GM12878 (cell line): ENCODE measurements at regions of chr3 and their contacts with region 1.

Region 1: GRCh38 chr3:23761440-23761896 is 44.3 kb upstream of the UBE2E1 start:
- DNase-seq: peak; percentile 56
- ATAC-seq: peak; percentile 68
- H3K4me3 ChIP-seq: peak overlapping the region; percentile 50; the same call in 1 of the 2 replicates
- H3K27ac ChIP-seq: peak overlapping the region; percentile 39
- H3K4me1 ChIP-seq: peaks cover 37% of the 10 kb centered on the region
- H3K27me3 ChIP-seq: no peaks in the 10 kb centered on the region
- CTCF ChIP-seq: peak; percentile 49 to 59 (median 54)
- EP300 ChIP-seq: no peak; a peak in 1 of 4 replicates
- POLR2A ChIP-seq: no peak
- RAD21 ChIP-seq: peak; percentile 72

Region 2: GRCh38 chr3:23590424-23591273 is 170.8 kb before region 1 on chr3:
- CTCF ChIA-PET with region 1: interaction called, 14 read pairs
- POLR2A ChIA-PET with region 1: no interaction called
- RAD21 ChIA-PET with region 1: interaction called, 26 read pairs
- SMC1A ChIA-PET with region 1: interaction called, 23 read pairs
- in situ Hi-C with region 1: no loop called
- intact Hi-C with region 1: loop called (anchors 5 kb)
- DNase-seq: peak; percentile 78
- ATAC-seq: peak; percentile 80
- H3K4me3 ChIP-seq: no peak overlapping the region
- H3K27ac ChIP-seq: peak overlapping the region; percentile 17; the same call in 1 of the 2 replicates
- H3K4me1 ChIP-seq: peaks cover 37% of the 10 kb centered on the region
- H3K27me3 ChIP-seq: no peaks in the 10 kb centered on the region
- CTCF ChIP-seq: no peak
- EP300 ChIP-seq: peak in 1 of 2 experiments; percentile 83; a peak in 3 of 4 replicates
- POLR2A ChIP-seq: no peak
- RAD21 ChIP-seq: peak; percentile 27

Region 3: DNA sequence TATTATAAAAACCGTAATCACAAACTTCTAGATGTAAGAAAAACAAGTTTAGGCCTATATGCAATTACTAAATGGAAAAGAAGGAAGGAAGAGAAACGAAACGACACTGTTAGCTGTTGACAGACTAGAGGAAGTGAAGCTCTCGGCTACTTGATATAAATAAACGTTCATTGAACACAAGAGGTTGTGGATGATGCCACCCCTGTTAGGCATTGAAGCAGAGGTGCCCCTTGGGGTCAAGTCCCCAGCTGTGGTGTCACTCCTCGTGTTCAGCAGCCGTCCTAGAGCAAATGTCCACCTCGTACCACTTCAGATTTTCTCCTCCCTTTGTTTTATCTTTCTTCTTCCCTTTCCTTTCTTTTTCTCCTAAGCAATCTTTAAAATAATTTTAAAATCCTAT is 102.2 kb before region 1 on chr3:
- CTCF ChIA-PET with region 1: interaction called, 5 read pairs
- POLR2A ChIA-PET with region 1: interaction called, 5 read pairs
- RAD21 ChIA-PET with region 1: interaction called, 23 read pairs
- SMC1A ChIA-PET with region 1: interaction called, 33 read pairs
- in situ Hi-C with region 1: no loop called
- intact Hi-C with region 1: no loop called
- DNase-seq: peak; percentile 60
- ATAC-seq: peak; percentile 88
- H3K4me3 ChIP-seq: no peak overlapping the region
- H3K27ac ChIP-seq: peak overlapping the region; percentile 81
- H3K4me1 ChIP-seq: peaks cover 36% of the 10 kb centered on the region
- H3K27me3 ChIP-seq: no peaks in the 10 kb centered on the region
- CTCF ChIP-seq: no peak
- EP300 ChIP-seq: peak; percentile 36 to 56; a peak in 1 of 4 replicates
- POLR2A ChIP-seq: no peak
- RAD21 ChIP-seq: no peak

Region 4: DNA sequence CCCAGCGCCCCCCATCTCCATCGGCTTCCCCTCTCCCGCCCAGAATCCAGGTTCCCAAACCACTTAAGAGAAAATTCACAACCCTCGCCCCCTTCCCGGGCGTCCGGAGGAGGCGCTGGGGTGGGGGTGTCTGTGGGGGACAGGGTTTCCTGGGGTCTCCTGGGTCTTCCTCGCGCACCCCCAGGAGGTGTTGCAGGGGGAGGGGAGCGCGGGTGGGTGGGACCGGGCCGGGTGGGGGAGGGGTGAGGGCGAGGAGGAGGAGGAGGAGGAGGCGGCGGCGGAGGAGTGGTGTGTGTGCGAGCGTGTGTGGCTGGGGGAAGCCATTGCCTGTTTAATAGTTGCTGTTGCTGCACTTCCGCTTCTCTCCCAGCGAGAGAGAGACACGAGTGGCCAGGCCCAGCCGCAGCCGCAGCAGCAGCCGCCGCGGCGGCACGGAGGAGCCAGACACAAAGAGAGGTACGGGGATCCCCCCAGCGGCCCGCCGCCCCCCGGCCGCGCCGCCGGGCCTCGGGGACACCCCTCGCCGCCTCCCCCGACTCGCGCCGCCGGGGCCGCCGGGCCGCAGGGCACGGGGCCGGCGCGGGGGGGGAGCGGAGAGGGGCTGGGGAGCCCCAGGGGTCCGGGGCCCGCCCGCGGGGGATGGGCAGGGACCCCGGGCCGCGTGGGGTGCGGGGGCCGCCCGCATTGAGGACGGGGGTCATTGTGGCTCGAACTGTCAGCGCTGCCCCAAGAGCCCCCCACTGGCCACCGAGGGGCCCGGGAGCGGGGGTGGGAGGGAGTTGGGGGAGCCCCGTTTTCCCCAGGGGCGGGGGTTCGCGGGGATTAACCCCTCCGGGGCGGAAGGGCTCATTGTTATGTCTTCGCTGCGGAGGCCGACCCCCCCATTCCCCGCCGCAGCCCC is 44.4 kb after region 1 on chr3 and contains the start of gene UBE2E1:
- CTCF ChIA-PET with region 1: interaction called, 4 read pairs
- POLR2A ChIA-PET with region 1: interaction called, 7 read pairs
- RAD21 ChIA-PET with region 1: interaction called, 6 read pairs
- SMC1A ChIA-PET with region 1: interaction called, 36 read pairs
- in situ Hi-C with region 1: no loop called
- intact Hi-C with region 1: loop called (anchors 2 kb)
- DNase-seq: no peak
- ATAC-seq: peak; percentile 71
- H3K4me3 ChIP-seq: peak within 1 kb of the TSS; percentile 98
- H3K27ac ChIP-seq: peak within 1 kb of the TSS; percentile 82
- H3K4me1 ChIP-seq: peaks cover 8% of the 10 kb centered on the region
- H3K27me3 ChIP-seq: no peaks in the 10 kb centered on the region
- CTCF ChIP-seq: no peak
- EP300 ChIP-seq: 0 out of 4 replicates have a peak, but pooled peaks of 1 of the 2 experiments have one; percentile 57
- POLR2A ChIP-seq: peak; percentile 84
- RAD21 ChIP-seq: no peak
- polyA plus RNA-seq, gene UBE2E1: 113 to 128 TPM

Region 5: GRCh38 chr3:23865595-23866450 is 104.4 kb after region 1 on chr3:
- CTCF ChIA-PET with region 1: interaction called, 6 read pairs
- POLR2A ChIA-PET with region 1: no interaction called
- RAD21 ChIA-PET with region 1: interaction called, 9 read pairs
- SMC1A ChIA-PET with region 1: interaction called, 9 read pairs
- in situ Hi-C with region 1: no loop called
- intact Hi-C with region 1: loop called (anchors 2 kb)
- DNase-seq: peak; percentile 45
- ATAC-seq: peak; percentile 89
- H3K4me3 ChIP-seq: peak overlapping the region; percentile 10; the same call in 1 of the 2 replicates
- H3K27ac ChIP-seq: peak overlapping the region; percentile 63
- H3K4me1 ChIP-seq: peaks cover 22% of the 10 kb centered on the region
- H3K27me3 ChIP-seq: no peaks in the 10 kb centered on the region
- CTCF ChIP-seq: no peak
- EP300 ChIP-seq: peak; percentile 63 to 77; a peak in 2 of 4 replicates
- POLR2A ChIP-seq: no peak
- RAD21 ChIP-seq: no peak

Region 6: DNA sequence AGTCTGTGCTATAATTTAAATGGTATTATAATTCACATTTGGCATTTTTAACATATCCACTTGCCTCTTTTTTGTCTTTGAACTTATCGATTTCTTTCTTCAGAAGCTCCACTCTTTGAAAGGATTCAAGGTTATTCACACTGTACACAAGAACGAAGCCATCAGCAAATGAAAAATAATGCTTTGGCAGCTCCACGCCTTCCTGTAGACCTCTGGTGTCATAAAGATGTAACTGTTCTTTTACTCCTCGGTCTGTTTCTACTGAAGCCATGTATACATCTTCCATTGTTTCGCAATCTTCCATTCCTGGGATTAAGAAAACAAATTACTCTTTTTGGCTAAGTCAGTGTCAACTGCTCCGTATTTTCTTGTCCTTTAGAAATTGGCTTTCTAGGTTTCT is 139.3 kb after region 1 on chr3:
- CTCF ChIA-PET with region 1: no interaction called
- POLR2A ChIA-PET with region 1: no interaction called
- RAD21 ChIA-PET with region 1: no interaction called
- SMC1A ChIA-PET with region 1: no interaction called
- in situ Hi-C with region 1: no loop called
- intact Hi-C with region 1: no loop called
- DNase-seq: no peak
- ATAC-seq: no peak
- H3K4me3 ChIP-seq: no peak overlapping the region
- H3K27ac ChIP-seq: no peak overlapping the region
- H3K4me1 ChIP-seq: no peaks in the 10 kb centered on the region
- H3K27me3 ChIP-seq: no peaks in the 10 kb centered on the region
- CTCF ChIP-seq: no peak
- EP300 ChIP-seq: no peak
- POLR2A ChIP-seq: no peak
- RAD21 ChIP-seq: no peak

Region 7: GRCh38 chr3:24810881-24811280 is 1049.4 kb after region 1 on chr3:
- CTCF ChIA-PET with region 1: no interaction called
- POLR2A ChIA-PET with region 1: no interaction called
- RAD21 ChIA-PET with region 1: no interaction called
- SMC1A ChIA-PET with region 1: no interaction called
- in situ Hi-C with region 1: no loop called
- intact Hi-C with region 1: no loop called
- DNase-seq: no peak
- ATAC-seq: no peak
- H3K4me3 ChIP-seq: no peak overlapping the region
- H3K27ac ChIP-seq: no peak overlapping the region
- H3K4me1 ChIP-seq: no peaks in the 10 kb centered on the region
- H3K27me3 ChIP-seq: no peaks in the 10 kb centered on the region
- CTCF ChIP-seq: no peak
- EP300 ChIP-seq: no peak
- POLR2A ChIP-seq: no peak
- RAD21 ChIP-seq: no peak